ENCODE measurements at regions of chr1 and their contacts with region 1.

Region 1: DNA sequence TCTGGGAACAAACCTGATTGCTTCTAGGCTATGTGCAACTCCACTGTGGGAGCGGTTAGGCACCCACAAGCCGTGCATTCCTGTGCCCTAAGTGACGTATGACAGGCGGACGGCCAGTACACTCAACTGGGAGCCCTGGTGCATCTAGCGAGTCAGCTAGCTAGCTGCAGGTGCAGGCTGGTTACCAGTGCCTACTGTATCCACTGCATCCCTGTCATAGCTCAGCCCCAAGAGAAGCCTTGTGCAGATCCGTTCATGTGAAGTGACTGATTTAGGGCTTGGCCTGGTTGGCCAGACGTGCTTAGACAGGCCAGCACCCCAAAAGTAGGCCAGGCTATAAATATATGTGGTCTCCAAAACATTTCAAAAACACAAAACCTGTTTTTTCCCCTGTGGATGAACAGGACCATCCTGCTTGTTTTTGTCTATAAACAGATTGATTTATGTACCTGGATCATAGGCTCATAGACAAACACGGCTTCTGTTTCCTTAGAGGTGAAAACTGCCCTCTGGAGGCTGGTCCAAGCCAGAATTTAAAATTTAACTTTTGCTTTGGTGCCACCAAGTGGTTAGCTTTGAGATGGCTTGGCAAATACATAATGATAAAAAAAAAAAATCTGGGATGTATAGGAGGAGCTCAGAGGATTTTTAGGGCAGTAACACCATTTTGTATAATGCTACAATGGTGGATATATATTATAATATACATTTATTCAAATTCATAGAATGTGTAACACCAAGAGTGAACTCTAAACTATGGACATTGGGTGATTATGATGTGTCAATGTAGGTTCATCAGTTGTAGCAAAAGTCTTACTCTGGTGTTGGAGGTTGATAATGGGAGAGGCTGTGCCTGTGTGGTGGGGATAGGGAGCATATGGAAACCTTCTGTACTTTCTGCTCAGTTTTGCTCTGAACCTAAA is 68.5 kb downstream of the GIPC2 start:
- DNase-seq: peak; percentile 93
- H3K4me3 ChIP-seq: no peak overlapping the region
- H3K27ac ChIP-seq: no peak overlapping the region
- H3K4me1 ChIP-seq: no peaks in the 10 kb centered on the region
- H3K27me3 ChIP-seq: no peaks in the 10 kb centered on the region
- CTCF ChIP-seq: peak; percentile 57 to 76
- POLR2A ChIP-seq: no peak

Region 2: GRCh38 chr1:77533660-77534305 is 580.5 kb before region 1 on chr1:
- CTCF ChIA-PET with region 1: no interaction called
- POLR2A ChIA-PET with region 1: no interaction called
- dilution Hi-C with region 1: no loop called
- intact Hi-C with region 1: loop called (anchors 10 kb)
- DNase-seq: peak; percentile 80
- H3K4me3 ChIP-seq: no peak overlapping the region
- H3K27ac ChIP-seq: no peak overlapping the region
- H3K4me1 ChIP-seq: peaks cover 22% of the 10 kb centered on the region
- H3K27me3 ChIP-seq: no peaks in the 10 kb centered on the region
- CTCF ChIP-seq: peak; percentile 77 to 81
- POLR2A ChIP-seq: no peak

Region 3: DNA sequence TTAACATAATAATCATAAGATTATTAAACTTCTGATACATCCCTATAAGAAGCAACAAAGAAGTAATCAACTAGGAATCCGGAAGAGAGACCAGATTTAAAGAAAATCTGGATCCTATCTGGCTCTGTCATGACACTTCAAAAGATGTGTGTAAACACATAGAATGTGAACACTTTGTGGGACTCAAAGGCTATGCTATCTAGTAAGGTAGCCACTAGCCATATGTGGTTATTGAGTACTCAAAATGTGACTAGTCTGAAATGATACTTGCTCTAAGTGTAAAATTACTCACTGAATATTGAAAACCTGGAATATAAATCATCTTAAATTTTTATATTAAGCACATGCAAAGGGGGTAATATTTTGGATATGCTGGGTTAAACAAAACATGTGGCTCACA is 144.1 kb before region 1 on chr1:
- CTCF ChIA-PET with region 1: interaction called, 70 read pairs
- POLR2A ChIA-PET with region 1: interaction called, 4 read pairs
- dilution Hi-C with region 1: no loop called
- intact Hi-C with region 1: no loop called
- DNase-seq: no peak
- H3K4me3 ChIP-seq: no peak overlapping the region
- H3K27ac ChIP-seq: no peak overlapping the region
- H3K4me1 ChIP-seq: peaks cover 4% of the 10 kb centered on the region
- H3K27me3 ChIP-seq: no peaks in the 10 kb centered on the region
- CTCF ChIP-seq: no peak
- POLR2A ChIP-seq: no peak

Region 4: GRCh38 chr1:78004719-78005447 is 109.4 kb before region 1 on chr1 and contains the start of gene DNAJB4:
- CTCF ChIA-PET with region 1: interaction called, 250 read pairs
- POLR2A ChIA-PET with region 1: interaction called, 35 read pairs
- dilution Hi-C with region 1: no loop called
- intact Hi-C with region 1: loop called (anchors 1 kb)
- DNase-seq: peak; percentile 98
- H3K4me3 ChIP-seq: peak within 1 kb of the TSS; percentile 69 to 99 (median 98)
- H3K27ac ChIP-seq: peak within 1 kb of the TSS; percentile 82
- H3K4me1 ChIP-seq: peaks cover 29% of the 10 kb centered on the region
- H3K27me3 ChIP-seq: no peaks in the 10 kb centered on the region
- CTCF ChIP-seq: no peak
- POLR2A ChIP-seq: peak; percentile 94
- total RNA-seq, gene DNAJB4: 122 and 136 TPM in 2 replicates

Region 5: GRCh38 chr1:78045926-78046778 is 68.1 kb before region 1 on chr1 and contains the start of gene GIPC2:
- CTCF ChIA-PET with region 1: interaction called, 68 read pairs
- POLR2A ChIA-PET with region 1: no interaction called
- dilution Hi-C with region 1: no loop called
- intact Hi-C with region 1: loop called (anchors 1 kb)
- DNase-seq: peak; percentile 59
- H3K4me3 ChIP-seq: peak within 1 kb of the TSS; percentile 63 to 74 (median 73)
- H3K27ac ChIP-seq: peak within 1 kb of the TSS; percentile 53
- H3K4me1 ChIP-seq: peaks cover 31% of the 10 kb centered on the region
- H3K27me3 ChIP-seq: no peaks in the 10 kb centered on the region
- CTCF ChIP-seq: no peak
- POLR2A ChIP-seq: no peak
- total RNA-seq, gene GIPC2: 7.7 and 9.6 TPM in 2 replicates

Region 6: GRCh38 chr1:78081980-78082860 is 32.1 kb before region 1 on chr1:
- CTCF ChIA-PET with region 1: interaction called, 15 read pairs
- POLR2A ChIA-PET with region 1: no interaction called
- dilution Hi-C with region 1: no loop called
- intact Hi-C with region 1: loop called (anchors 1 kb)
- DNase-seq: peak; percentile 53
- H3K4me3 ChIP-seq: no peak overlapping the region
- H3K27ac ChIP-seq: no peak overlapping the region
- H3K4me1 ChIP-seq: peaks cover 39% of the 10 kb centered on the region
- H3K27me3 ChIP-seq: no peaks in the 10 kb centered on the region
- CTCF ChIP-seq: no peak
- POLR2A ChIP-seq: no peak

Measured in endothelial cell of umbilical vein (primary cell).